GM12878 (cell line): ENCODE measurements at regions of chr5 and their contacts with region 1.

Region 1: GRCh38 chr5:139439013-139439903 is at the start of gene DNAJC18:
- DNase-seq: peak; percentile 53
- ATAC-seq: peak; percentile 81
- H3K4me3 ChIP-seq: peak within 1 kb of the TSS; percentile 84
- H3K27ac ChIP-seq: peak within 1 kb of the TSS; percentile 95
- H3K4me1 ChIP-seq: peaks cover 24% of the 10 kb centered on the region
- H3K27me3 ChIP-seq: no peaks in the 10 kb centered on the region
- CTCF ChIP-seq: no peak
- EP300 ChIP-seq: no peak
- POLR2A ChIP-seq: peak; percentile 74
- RAD21 ChIP-seq: 0 out of 2 replicates have a peak, but pooled peaks have one; percentile 3
- polyA plus RNA-seq, gene DNAJC18: 20.5 to 26.7 TPM

Region 2: GRCh38 chr5:138989720-138990119 is 449.5 kb before region 1 on chr5:
- CTCF ChIA-PET with region 1: no interaction called
- POLR2A ChIA-PET with region 1: no interaction called
- RAD21 ChIA-PET with region 1: no interaction called
- SMC1A ChIA-PET with region 1: no interaction called
- in situ Hi-C with region 1: no loop called
- intact Hi-C with region 1: no loop called
- DNase-seq: no peak
- ATAC-seq: no peak
- H3K4me3 ChIP-seq: no peak overlapping the region
- H3K27ac ChIP-seq: no peak overlapping the region
- H3K4me1 ChIP-seq: no peaks in the 10 kb centered on the region
- H3K27me3 ChIP-seq: no peaks in the 10 kb centered on the region
- CTCF ChIP-seq: no peak
- EP300 ChIP-seq: no peak
- POLR2A ChIP-seq: no peak
- RAD21 ChIP-seq: no peak

Region 3: DNA sequence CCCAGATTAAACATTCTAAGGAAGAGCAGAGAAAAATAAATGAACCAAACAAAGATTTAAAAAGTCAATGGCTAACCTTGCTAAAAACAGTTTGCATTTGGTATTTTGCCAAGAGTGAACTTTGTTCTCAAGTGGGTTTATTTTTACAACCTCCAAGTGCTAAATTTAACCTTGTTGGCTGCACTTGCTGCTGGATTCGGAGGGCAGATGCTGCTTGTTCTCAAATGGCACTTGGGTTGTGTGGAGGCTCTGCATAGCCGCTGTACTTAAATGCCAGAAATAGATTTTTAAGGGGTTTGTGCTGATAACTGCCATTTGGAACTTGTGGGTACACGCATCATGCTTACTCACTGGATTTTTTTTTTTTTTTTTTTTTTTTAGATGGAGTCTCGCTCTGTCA is 22.0 kb before region 1 on chr5:
- CTCF ChIA-PET with region 1: interaction called, 83 read pairs
- POLR2A ChIA-PET with region 1: interaction called, 14 read pairs
- RAD21 ChIA-PET with region 1: interaction called, 19 read pairs
- SMC1A ChIA-PET with region 1: interaction called, 61 read pairs
- in situ Hi-C with region 1: no loop called
- intact Hi-C with region 1: no loop called
- DNase-seq: no peak
- ATAC-seq: no peak
- H3K4me3 ChIP-seq: no peak overlapping the region
- H3K27ac ChIP-seq: no peak overlapping the region
- H3K4me1 ChIP-seq: peaks cover 21% of the 10 kb centered on the region
- H3K27me3 ChIP-seq: no peaks in the 10 kb centered on the region
- CTCF ChIP-seq: no peak
- EP300 ChIP-seq: no peak
- POLR2A ChIP-seq: no peak
- RAD21 ChIP-seq: no peak

Region 4: GRCh38 chr5:139482050-139482889 is 43.0 kb after region 1 on chr5 and contains the start of gene STING1:
- CTCF ChIA-PET with region 1: interaction called, 8 read pairs
- POLR2A ChIA-PET with region 1: interaction called, 10 read pairs
- RAD21 ChIA-PET with region 1: interaction called, 20 read pairs
- SMC1A ChIA-PET with region 1: interaction called, 24 read pairs
- in situ Hi-C with region 1: no loop called
- intact Hi-C with region 1: no loop called
- DNase-seq: peak; percentile 41
- ATAC-seq: peak; percentile 75
- H3K4me3 ChIP-seq: peak within 1 kb of the TSS; percentile 59
- H3K27ac ChIP-seq: peak within 1 kb of the TSS; percentile 91
- H3K4me1 ChIP-seq: peaks cover 27% of the 10 kb centered on the region
- H3K27me3 ChIP-seq: no peaks in the 10 kb centered on the region
- CTCF ChIP-seq: no peak
- EP300 ChIP-seq: no peak
- POLR2A ChIP-seq: peak; percentile 29
- RAD21 ChIP-seq: no peak
- polyA plus RNA-seq, gene STING1: 10.1 to 12.1 TPM

Region 5: DNA sequence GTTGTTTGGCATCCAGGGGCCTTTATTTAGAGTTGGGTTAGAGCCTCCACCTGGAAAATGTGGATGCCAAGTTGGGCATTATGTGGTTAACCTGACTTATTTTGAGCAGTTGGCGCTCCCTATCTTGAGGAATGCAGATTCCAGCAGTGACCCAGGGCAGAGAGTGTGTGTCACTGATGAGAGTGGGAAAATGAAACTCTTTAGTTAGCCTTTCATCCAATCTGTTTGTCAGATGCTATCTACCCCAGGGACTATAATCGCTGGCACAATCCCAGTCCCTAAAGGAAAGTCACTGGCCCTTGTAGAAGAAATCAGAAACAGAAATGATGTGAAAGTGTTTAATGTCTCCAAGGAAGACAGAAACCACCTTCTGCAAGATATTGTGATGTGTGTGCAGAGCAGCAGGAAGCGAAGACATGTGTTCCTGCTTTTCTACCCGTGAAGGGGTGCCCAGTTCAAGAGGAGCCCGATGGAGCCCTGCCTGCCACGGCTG is 53.5 kb after region 1 on chr5:
- CTCF ChIA-PET with region 1: interaction called, 10 read pairs
- POLR2A ChIA-PET with region 1: interaction called, 3 read pairs
- RAD21 ChIA-PET with region 1: interaction called, 3 read pairs
- SMC1A ChIA-PET with region 1: interaction called, 3 read pairs
- in situ Hi-C with region 1: no loop called
- intact Hi-C with region 1: no loop called
- DNase-seq: no peak
- ATAC-seq: no peak
- H3K4me3 ChIP-seq: no peak overlapping the region
- H3K27ac ChIP-seq: no peak overlapping the region
- H3K4me1 ChIP-seq: peaks cover 7% of the 10 kb centered on the region
- H3K27me3 ChIP-seq: no peaks in the 10 kb centered on the region
- CTCF ChIP-seq: no peak
- EP300 ChIP-seq: no peak
- POLR2A ChIP-seq: no peak
- RAD21 ChIP-seq: no peak